Panc1 (cell line): ENCODE measurements at regions of chr7 and their contacts with region 1.

Region 1: GRCh38 chr7:26376175-26376917 is 84.7 kb downstream of the SNX10 start:
- DNase-seq: no peak
- ATAC-seq: peak; percentile 81
- H3K4me3 ChIP-seq: peak overlapping the region; percentile 53 to 55
- H3K27ac ChIP-seq: no peak overlapping the region
- H3K4me1 ChIP-seq: no peaks in the 10 kb centered on the region; the same call in 1 of the 2 replicates
- H3K27me3 ChIP-seq: peaks cover 34% of the 10 kb centered on the region
- CTCF ChIP-seq: no peak

Region 2: DNA sequence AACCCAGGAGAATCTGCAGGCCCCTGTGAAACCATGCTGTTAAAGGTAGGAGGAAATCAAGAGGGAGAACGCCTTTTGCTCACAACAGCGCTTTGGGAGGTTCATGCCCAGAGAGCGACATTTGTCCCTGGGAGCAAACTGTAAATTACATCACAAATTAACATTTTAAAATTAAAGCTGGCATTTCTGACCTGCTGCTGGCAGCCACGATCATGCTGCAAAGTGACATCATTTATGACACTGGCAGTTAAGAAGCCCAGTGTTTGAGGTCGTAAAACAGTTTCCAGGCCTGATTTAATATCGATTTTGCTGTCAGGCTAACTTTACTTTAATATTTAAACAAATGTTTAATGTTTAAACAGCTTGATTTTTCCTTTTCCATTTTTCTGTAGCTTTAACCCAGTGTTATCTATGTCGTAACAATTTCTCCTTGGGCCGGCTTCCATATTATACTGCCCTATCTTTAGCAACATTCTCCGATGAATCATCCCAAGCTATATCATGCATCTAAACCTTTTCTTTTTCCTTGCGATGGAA is 1061.5 kb before region 1 on chr7:
- CTCF ChIA-PET with region 1: no interaction called
- POLR2A ChIA-PET with region 1: no interaction called
- in situ Hi-C with region 1: no loop called
- intact Hi-C with region 1: no loop called
- DNase-seq: no peak
- ATAC-seq: no peak
- H3K4me3 ChIP-seq: no peak overlapping the region
- H3K27ac ChIP-seq: no peak overlapping the region
- H3K4me1 ChIP-seq: no peaks in the 10 kb centered on the region
- H3K27me3 ChIP-seq: 0 out of 2 replicates have a peak, but pooled peaks cover 2% of the 10 kb centered on the region
- CTCF ChIP-seq: no peak

Region 3: GRCh38 chr7:25600262-25600920 is 776.0 kb before region 1 on chr7:
- CTCF ChIA-PET with region 1: no interaction called
- POLR2A ChIA-PET with region 1: no interaction called
- in situ Hi-C with region 1: no loop called
- intact Hi-C with region 1: no loop called
- DNase-seq: no peak
- ATAC-seq: no peak
- H3K4me3 ChIP-seq: no peak overlapping the region
- H3K27ac ChIP-seq: no peak overlapping the region
- H3K4me1 ChIP-seq: no peaks in the 10 kb centered on the region; the same call in 1 of the 2 replicates
- H3K27me3 ChIP-seq: peaks cover 8% of the 10 kb centered on the region
- CTCF ChIP-seq: no peak

Region 4: GRCh38 chr7:26187380-26188205 is 188.8 kb before region 1 on chr7:
- CTCF ChIA-PET with region 1: no interaction called
- POLR2A ChIA-PET with region 1: no interaction called
- in situ Hi-C with region 1: no loop called
- intact Hi-C with region 1: no loop called
- DNase-seq: no peak
- ATAC-seq: peak; percentile 28
- H3K4me3 ChIP-seq: no peak overlapping the region
- H3K27ac ChIP-seq: peak overlapping the region; percentile 87
- H3K4me1 ChIP-seq: peaks cover 92% of the 10 kb centered on the region
- H3K27me3 ChIP-seq: no peaks in the 10 kb centered on the region
- CTCF ChIP-seq: no peak

Region 5: GRCh38 chr7:26500749-26501352 is 124.5 kb after region 1 on chr7:
- CTCF ChIA-PET with region 1: interaction called, 7 read pairs
- POLR2A ChIA-PET with region 1: no interaction called
- in situ Hi-C with region 1: no loop called
- intact Hi-C with region 1: loop called (anchors 2 kb)
- DNase-seq: no peak
- ATAC-seq: no peak
- H3K4me3 ChIP-seq: no peak overlapping the region
- H3K27ac ChIP-seq: no peak overlapping the region
- H3K4me1 ChIP-seq: no peaks in the 10 kb centered on the region
- H3K27me3 ChIP-seq: peaks cover 5% of the 10 kb centered on the region; the same call in 1 of the 2 replicates
- CTCF ChIP-seq: peak; percentile 71; the same call in 1 of the 2 replicates

Region 6: DNA sequence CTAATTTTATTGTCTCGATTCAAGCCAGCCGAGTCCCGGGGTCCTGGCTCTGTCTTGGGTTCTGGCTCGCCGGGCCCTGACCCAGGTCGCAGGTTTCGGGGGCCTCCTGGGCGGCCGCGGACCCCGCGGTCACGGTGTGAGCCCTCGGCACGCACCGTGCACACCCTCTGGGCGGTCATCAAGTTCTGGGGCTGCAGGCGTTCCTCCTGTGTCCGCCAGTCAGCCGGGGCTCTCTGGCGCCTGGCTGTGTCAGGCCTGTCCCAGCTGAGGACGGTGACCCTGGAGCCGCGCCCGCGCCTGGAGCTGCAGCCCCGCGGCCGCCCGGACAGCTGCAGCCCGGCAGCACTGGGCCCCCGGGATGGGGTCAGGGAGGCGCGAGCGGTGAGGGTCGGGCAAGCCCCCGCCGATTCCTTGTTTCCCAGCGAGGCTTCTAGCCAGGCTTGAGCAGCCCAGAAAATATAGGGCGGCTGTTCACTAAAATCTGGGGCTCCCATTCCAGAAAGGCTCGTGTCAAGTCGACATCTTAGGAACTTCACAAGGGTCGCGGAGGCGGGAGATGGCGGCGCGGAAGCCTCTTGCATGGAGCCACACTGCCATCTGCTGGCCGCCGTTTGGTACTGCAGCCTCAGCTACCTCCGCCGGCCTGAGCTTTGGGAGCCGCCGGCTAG is 784.3 kb after region 1 on chr7:
- CTCF ChIA-PET with region 1: no interaction called
- POLR2A ChIA-PET with region 1: no interaction called
- in situ Hi-C with region 1: no loop called
- intact Hi-C with region 1: loop called (anchors 5 kb)
- DNase-seq: no peak
- ATAC-seq: peak; percentile 87
- H3K4me3 ChIP-seq: peak overlapping the region; percentile 71 to 80
- H3K27ac ChIP-seq: peak overlapping the region; percentile 81
- H3K4me1 ChIP-seq: no peaks in the 10 kb centered on the region
- H3K27me3 ChIP-seq: no peaks in the 10 kb centered on the region
- CTCF ChIP-seq: peak; percentile 100

Region 7: GRCh38 chr7:27196287-27196767 is 820.0 kb after region 1 on chr7:
- CTCF ChIA-PET with region 1: no interaction called
- POLR2A ChIA-PET with region 1: no interaction called
- in situ Hi-C with region 1: no loop called
- intact Hi-C with region 1: no loop called
- DNase-seq: peak; percentile 66
- ATAC-seq: no peak
- H3K4me3 ChIP-seq: no peak overlapping the region
- H3K27ac ChIP-seq: no peak overlapping the region
- H3K4me1 ChIP-seq: peaks cover 10% of the 10 kb centered on the region
- H3K27me3 ChIP-seq: no peaks in the 10 kb centered on the region; the same call in 1 of the 2 replicates
- CTCF ChIP-seq: peak; percentile 89